Tibial artery (tissue), 4 donors: ENCODE measurements at regions of chr15 and their contacts with region 1.

Region 1: GRCh38 chr15:64681424-64682024 is 93.9 kb downstream of the RBPMS2 start:
- DNase-seq: no peak
- H3K4me3 ChIP-seq: no peak overlapping the region
- H3K27ac ChIP-seq: peak overlapping the region in 1 of 2 donors; percentile 53
- H3K4me1 ChIP-seq: peaks cover 0 to 3% (median 0%) of the 10 kb centered on the region in 4 donors
- H3K27me3 ChIP-seq: no peaks in the 10 kb centered on the region
- CTCF ChIP-seq: peak; percentile 52 to 55

Region 2: DNA sequence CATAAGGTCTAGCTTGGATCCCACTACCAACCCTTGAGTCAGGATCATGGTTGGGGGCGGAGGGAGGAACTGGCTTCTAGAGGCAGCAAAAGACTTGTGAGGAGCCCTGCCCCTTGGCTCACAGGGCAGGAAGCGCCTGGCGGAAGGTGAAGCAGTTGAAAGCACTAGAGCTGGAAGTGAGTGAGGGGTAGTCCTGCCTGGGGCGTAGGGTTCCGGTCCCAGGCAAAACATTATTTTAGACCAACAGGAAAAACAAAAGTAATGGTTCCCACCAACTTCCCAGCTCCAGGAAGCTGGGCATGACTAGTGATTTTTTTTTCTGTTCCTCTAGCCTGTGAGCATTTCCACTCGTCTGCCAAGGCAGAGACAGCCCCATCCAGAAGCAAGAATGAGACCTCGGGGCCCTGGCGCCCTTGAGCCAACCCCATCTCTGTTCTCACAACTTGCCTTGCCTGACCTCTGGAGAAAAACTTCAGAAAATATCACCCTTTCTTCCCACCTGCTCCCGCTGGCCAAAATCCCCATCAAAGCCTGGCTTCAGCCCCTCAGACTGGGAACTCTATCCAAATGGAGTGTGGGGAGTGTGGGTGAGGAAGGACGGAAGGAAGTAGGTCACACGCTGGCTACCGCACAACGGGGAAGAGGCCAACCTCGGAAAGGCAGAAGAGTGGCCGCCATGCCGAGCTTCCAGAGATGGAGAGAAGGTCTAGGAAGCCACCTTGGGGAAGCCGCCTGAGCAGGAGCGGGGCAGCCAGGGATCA is 36.4 kb after region 1 on chr15:
- intact Hi-C with region 1: loop called (anchors 2 kb)
- DNase-seq: no peak
- H3K4me3 ChIP-seq: peak overlapping the region; percentile 13 to 14
- H3K27ac ChIP-seq: peak overlapping the region; percentile 72 to 86
- H3K4me1 ChIP-seq: peaks cover 0 to 23% (median 14%) of the 10 kb centered on the region in 4 donors
- H3K27me3 ChIP-seq: no peaks in the 10 kb centered on the region
- CTCF ChIP-seq: no peak

Region 3: GRCh38 chr15:64731012-64731806 is 49.7 kb after region 1 on chr15:
- intact Hi-C with region 1: loop called (anchors 2 kb)
- DNase-seq: peak; percentile 84 to 89
- H3K4me3 ChIP-seq: no peak overlapping the region
- H3K27ac ChIP-seq: peak overlapping the region in 1 of 2 donors; percentile 38
- H3K4me1 ChIP-seq: peaks cover 0 to 8% (median 3%) of the 10 kb centered on the region in 4 donors
- H3K27me3 ChIP-seq: no peaks in the 10 kb centered on the region
- CTCF ChIP-seq: peak; percentile 92 to 95

Region 4: GRCh38 chr15:64921711-64922110 is 240.2 kb after region 1 on chr15:
- intact Hi-C with region 1: no loop called
- DNase-seq: no peak
- H3K4me3 ChIP-seq: no peak overlapping the region
- H3K27ac ChIP-seq: peak overlapping the region; percentile 75 to 86
- H3K4me1 ChIP-seq: peaks cover 0 to 27% (median 12%) of the 10 kb centered on the region in 4 donors
- H3K27me3 ChIP-seq: no peaks in the 10 kb centered on the region
- CTCF ChIP-seq: no peak

Region 5: GRCh38 chr15:65887565-65887964 is 1206.0 kb after region 1 on chr15:
- intact Hi-C with region 1: no loop called
- DNase-seq: no peak
- H3K4me3 ChIP-seq: no peak overlapping the region
- H3K27ac ChIP-seq: no peak overlapping the region
- H3K4me1 ChIP-seq: no peaks in the 10 kb centered on the region
- H3K27me3 ChIP-seq: no peaks in the 10 kb centered on the region
- CTCF ChIP-seq: no peak